ENCODE measurements at regions of chr17 and their contacts with region 1.

Region 1: GRCh38 chr17:58943848-58944565 is 162.7 kb downstream of the TRIM37 start:
- DNase-seq: no peak
- H3K4me3 Mint-ChIP-seq: no peak overlapping the region
- H3K27ac Mint-ChIP-seq: no peak overlapping the region
- H3K4me1 Mint-ChIP-seq: no peaks in the 10 kb centered on the region
- H3K27me3 Mint-ChIP-seq: peaks cover 10% of the 10 kb centered on the region

Region 2: GRCh38 chr17:59266751-59267150 is 322.7 kb after region 1 on chr17:
- intact Hi-C with region 1: loop called (anchors 5 kb)
- DNase-seq: no peak
- H3K4me3 Mint-ChIP-seq: no peak overlapping the region
- H3K27ac Mint-ChIP-seq: no peak overlapping the region
- H3K4me1 Mint-ChIP-seq: no peaks in the 10 kb centered on the region
- H3K27me3 Mint-ChIP-seq: peaks cover 2% of the 10 kb centered on the region